Activated naive CD8-positive, alpha-beta T cell treated with anti-CD3 and anti-CD28 coated beads, Interleukin-2, amount 10 ng/mL, durations not matched to agents 7 days and 5 days (primary cell): ENCODE measurements at regions of chr1 and their contacts with region 1.

Region 1: GRCh38 chr1:92960395-92961130 is 699 bp downstream of the DIPK1A start:
- DNase-seq: no peak
- ATAC-seq: peak; percentile 40
- H3K4me3 Mint-ChIP-seq: peak overlapping the region; percentile 93
- H3K27ac Mint-ChIP-seq: peak overlapping the region; percentile 97
- H3K4me1 Mint-ChIP-seq: peaks cover 34% of the 10 kb centered on the region
- H3K27me3 Mint-ChIP-seq: no peaks in the 10 kb centered on the region

Region 2: GRCh38 chr1:92877792-92878191 is 82.8 kb before region 1 on chr1:
- POLR2A ChIA-PET with region 1: interaction called, 14 read pairs
- DNase-seq: no peak
- ATAC-seq: no peak
- H3K4me3 Mint-ChIP-seq: peak overlapping the region; percentile 63
- H3K27ac Mint-ChIP-seq: peak overlapping the region; percentile 72
- H3K4me1 Mint-ChIP-seq: peaks cover 23% of the 10 kb centered on the region
- H3K27me3 Mint-ChIP-seq: no peaks in the 10 kb centered on the region

Region 3: DNA sequence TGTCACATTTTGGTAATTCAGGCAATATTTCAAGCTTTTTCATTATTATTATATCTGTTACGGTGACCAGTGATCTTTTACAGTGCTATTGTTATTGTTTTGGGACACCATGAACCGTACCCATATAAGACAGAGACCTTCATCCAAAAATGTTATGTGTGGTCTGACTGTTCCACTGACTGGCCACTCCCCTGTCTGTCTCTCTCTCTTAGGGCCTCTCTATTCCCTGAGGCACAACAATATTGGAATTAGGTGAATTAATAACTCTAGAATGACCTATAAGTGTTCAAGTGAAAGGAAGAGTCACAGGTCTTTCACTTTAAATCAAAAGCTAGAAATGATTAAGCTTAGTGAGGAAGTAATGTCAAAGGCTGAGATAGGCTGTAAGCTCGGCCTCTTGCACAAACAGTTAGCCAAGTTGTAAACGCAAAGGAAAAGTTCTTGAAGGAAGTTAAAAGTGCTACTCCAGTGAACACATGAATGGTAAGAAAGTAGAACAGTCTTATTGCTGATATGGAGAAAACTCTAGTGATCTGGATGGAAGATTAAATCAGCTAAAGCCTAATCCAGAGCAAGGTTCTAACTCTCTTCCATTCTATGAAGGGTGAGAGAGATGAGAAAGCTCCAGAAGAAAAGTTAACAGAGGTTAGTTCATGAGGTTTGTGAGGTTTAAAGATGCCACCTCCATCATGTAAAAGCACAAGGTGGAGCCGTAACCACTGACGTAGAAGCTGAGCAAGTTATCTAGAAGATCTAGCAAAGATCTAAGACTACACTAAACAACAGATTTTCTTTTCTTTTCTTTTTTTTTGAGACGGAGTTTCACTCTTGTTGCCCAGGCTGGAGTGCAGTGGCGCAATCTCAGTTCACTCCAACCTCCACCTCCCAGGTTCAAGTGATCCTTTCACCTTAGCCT is 20.4 kb after region 1 on chr1:
- POLR2A ChIA-PET with region 1: interaction called, 39 read pairs
- DNase-seq: no peak
- ATAC-seq: peak; percentile 87
- H3K4me3 Mint-ChIP-seq: peak overlapping the region; percentile 70
- H3K27ac Mint-ChIP-seq: peak overlapping the region; percentile 97
- H3K4me1 Mint-ChIP-seq: peaks cover 36% of the 10 kb centered on the region
- H3K27me3 Mint-ChIP-seq: no peaks in the 10 kb centered on the region

Region 4: GRCh38 chr1:93042187-93043056 is 81.9 kb after region 1 on chr1:
- POLR2A ChIA-PET with region 1: interaction called, 14 read pairs
- DNase-seq: peak; percentile 36
- ATAC-seq: peak; percentile 98
- H3K4me3 Mint-ChIP-seq: peak overlapping the region; percentile 86
- H3K27ac Mint-ChIP-seq: peak overlapping the region; percentile 95
- H3K4me1 Mint-ChIP-seq: peaks cover 22% of the 10 kb centered on the region
- H3K27me3 Mint-ChIP-seq: no peaks in the 10 kb centered on the region

Region 5: GRCh38 chr1:93345633-93346420 is 385.3 kb after region 1 on chr1 and contains the start of gene DR1:
- POLR2A ChIA-PET with region 1: interaction called, 13 read pairs
- DNase-seq: peak; percentile 94
- ATAC-seq: peak; percentile 74
- H3K4me3 Mint-ChIP-seq: peak within 1 kb of the TSS; percentile 96
- H3K27ac Mint-ChIP-seq: peak within 1 kb of the TSS; percentile 96
- H3K4me1 Mint-ChIP-seq: peaks cover 24% of the 10 kb centered on the region
- H3K27me3 Mint-ChIP-seq: no peaks in the 10 kb centered on the region
- total RNA-seq, gene DR1: 84.2 to 85.7 TPM